Endothelial cell of umbilical vein (primary cell): ENCODE measurements at regions of chr10 and their contacts with region 1.

Region 1: DNA sequence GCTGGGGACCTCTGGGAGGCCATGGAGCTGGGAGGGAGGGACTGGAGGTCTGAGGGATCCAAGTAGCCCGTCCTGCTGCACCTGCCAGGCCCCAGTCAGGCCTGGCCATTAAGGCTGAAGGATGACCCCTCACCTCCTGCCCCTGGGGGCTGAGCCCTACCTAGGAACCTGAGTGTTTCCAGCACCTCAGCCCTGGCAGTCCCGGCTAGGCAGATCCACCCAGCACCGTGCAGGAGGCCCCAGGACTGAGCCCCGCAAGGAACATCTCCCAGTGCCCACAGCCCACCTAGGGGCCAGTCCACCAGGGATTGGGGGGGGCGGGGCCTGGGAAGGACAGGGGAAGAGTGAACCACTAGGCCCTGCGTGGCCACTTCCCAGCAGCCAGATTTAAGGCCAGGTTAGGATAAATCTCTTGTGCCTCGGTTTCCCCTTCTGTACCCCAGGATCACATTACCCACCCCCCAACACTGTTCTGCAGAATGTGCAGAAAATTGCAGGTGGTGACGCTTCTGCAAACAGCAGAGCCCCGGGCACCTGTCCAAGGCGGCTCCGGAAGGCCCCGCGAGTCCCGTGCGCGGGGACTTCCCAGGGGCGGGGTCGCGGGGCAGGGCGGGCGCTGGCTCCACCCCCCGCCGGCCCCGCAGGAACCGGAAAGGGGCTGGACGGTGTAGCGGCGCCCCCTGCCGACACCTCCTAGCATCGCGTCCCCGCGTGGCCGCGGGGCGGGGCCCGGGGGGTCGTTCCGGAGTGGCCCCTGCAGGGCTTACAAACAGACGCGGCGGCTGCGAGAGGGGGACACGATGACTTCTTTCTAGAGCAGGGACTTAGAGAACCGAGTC is 55.9 kb downstream of the PWWP2B start:
- DNase-seq: peak; percentile 61
- H3K4me3 ChIP-seq: no peak overlapping the region
- H3K27ac ChIP-seq: no peak overlapping the region
- H3K4me1 ChIP-seq: peaks cover 4% of the 10 kb centered on the region
- H3K27me3 ChIP-seq: no peaks in the 10 kb centered on the region
- CTCF ChIP-seq: peak; percentile 87 to 88
- POLR2A ChIP-seq: no peak

Region 2: GRCh38 chr10:132223156-132223590 is 229.7 kb before region 1 on chr10:
- CTCF ChIA-PET with region 1: interaction called, 4 read pairs
- POLR2A ChIA-PET with region 1: no interaction called
- dilution Hi-C with region 1: no loop called
- intact Hi-C with region 1: loop called (anchors 1 kb)
- DNase-seq: peak; percentile 79
- H3K4me3 ChIP-seq: no peak overlapping the region
- H3K27ac ChIP-seq: no peak overlapping the region
- H3K4me1 ChIP-seq: no peaks in the 10 kb centered on the region
- H3K27me3 ChIP-seq: no peaks in the 10 kb centered on the region
- CTCF ChIP-seq: peak; percentile 87 to 98
- POLR2A ChIP-seq: no peak

Region 3: GRCh38 chr10:132387764-132388210 is 65.1 kb before region 1 on chr10:
- CTCF ChIA-PET with region 1: interaction called, 3 read pairs
- POLR2A ChIA-PET with region 1: no interaction called
- dilution Hi-C with region 1: no loop called
- intact Hi-C with region 1: loop called (anchors 1 kb)
- DNase-seq: peak; percentile 28
- H3K4me3 ChIP-seq: no peak overlapping the region
- H3K27ac ChIP-seq: no peak overlapping the region
- H3K4me1 ChIP-seq: no peaks in the 10 kb centered on the region
- H3K27me3 ChIP-seq: no peaks in the 10 kb centered on the region
- CTCF ChIP-seq: peak; percentile 40 to 79
- POLR2A ChIP-seq: no peak

Region 4: DNA sequence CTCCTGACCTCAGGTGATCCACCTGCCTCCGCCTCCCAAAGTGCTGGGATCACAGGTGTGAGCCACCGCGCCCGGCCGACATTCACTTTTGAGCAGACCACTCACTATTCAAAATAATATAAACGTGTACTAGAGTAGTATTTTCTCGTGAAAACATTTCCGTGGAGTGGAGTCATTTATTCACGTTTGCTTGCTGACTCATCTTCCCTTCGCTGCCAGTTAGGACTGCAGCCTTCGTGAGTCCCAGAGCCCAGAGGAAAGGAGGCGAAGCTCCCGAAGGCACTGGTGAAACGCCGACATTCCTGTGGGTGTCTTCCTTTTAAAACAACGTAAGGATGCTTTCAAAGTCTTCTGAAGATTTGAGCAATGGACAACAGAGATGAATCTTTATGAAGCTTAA is 73.8 kb after region 1 on chr10:
- CTCF ChIA-PET with region 1: no interaction called
- POLR2A ChIA-PET with region 1: no interaction called
- dilution Hi-C with region 1: no loop called
- intact Hi-C with region 1: no loop called
- DNase-seq: no peak
- H3K4me3 ChIP-seq: no peak overlapping the region
- H3K27ac ChIP-seq: no peak overlapping the region
- H3K4me1 ChIP-seq: no peaks in the 10 kb centered on the region
- H3K27me3 ChIP-seq: peaks cover 7 to 18% of the 10 kb centered on the region in 2 experiments
- CTCF ChIP-seq: no peak
- POLR2A ChIP-seq: no peak